ENCODE measurements at regions of chr10 and their contacts with region 1.

Region 1: DNA sequence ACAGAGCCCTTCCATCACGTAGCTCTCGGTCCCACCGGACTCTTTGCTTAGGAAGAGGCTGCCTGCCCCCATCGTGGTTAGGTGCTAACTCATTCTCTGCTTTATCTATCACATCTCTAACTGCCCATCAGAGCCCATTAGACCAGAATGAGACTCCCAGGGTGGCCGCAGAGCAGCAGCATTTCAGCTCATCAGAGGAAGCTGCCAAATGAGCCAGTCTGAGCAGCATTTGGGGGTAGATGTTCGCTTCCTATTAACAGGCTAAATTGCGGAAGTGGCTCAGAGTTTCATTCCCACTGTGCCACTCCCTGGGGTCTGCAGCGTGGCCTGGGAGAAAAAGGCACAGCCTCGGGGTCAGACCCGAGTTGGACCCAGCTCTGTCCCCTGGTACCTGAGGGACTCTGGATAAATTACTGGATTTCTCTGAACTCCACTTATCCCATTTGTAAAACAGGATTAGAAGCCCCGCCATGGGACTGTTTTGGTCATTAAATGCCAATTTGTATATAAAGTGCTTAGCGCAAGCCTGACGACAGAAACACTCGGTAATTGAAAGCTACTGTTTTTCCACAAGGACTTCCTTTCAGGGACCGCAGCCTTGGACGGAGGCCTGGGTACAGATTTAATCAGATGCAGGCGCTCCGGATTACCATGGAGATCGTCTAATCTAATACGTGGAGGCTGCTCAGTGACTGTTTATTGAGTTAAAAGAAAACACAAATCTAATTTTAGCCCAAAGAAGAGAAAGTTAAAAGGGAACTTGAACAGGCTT is 73.8 kb upstream of the PRLHR start:
- DNase-seq: peak in 3 of 5 donors; percentile 11 to 48 (median 18)
- H3K4me3 ChIP-seq: no peak overlapping the region
- H3K4me3 Mint-ChIP-seq: peak overlapping the region in 6 of 8 donors; percentile 22 to 70 (median 28)
- H3K27ac ChIP-seq: no peak overlapping the region
- H3K27ac Mint-ChIP-seq: peak overlapping the region in 5 of 7 donors; percentile 7 to 71 (median 55)
- H3K4me1 ChIP-seq: peaks cover 27% of the 10 kb centered on the region
- H3K4me1 Mint-ChIP-seq: peaks cover 14 to 39% (median 30%) of the 10 kb centered on the region in 4 donors
- H3K27me3 ChIP-seq: no peaks in the 10 kb centered on the region
- H3K27me3 Mint-ChIP-seq: no peaks in the 10 kb centered on the region

Region 2: GRCh38 chr10:118341791-118342637 is 327.2 kb before region 1 on chr10 and contains the start of gene FAM204A:
- CTCF ChIA-PET with region 1: no interaction called
- POLR2A ChIA-PET with region 1: no interaction called
- intact Hi-C with region 1: no loop called
- DNase-seq: peak; percentile 96 to 99 (median 97)
- H3K4me3 ChIP-seq: peak within 1 kb of the TSS; percentile 88 to 96
- H3K4me3 Mint-ChIP-seq: peak within 1 kb of the TSS; percentile 93 to 100 (median 95)
- H3K27ac ChIP-seq: peak within 1 kb of the TSS; percentile 78
- H3K27ac Mint-ChIP-seq: peak within 1 kb of the TSS; percentile 93 to 99 (median 97)
- H3K4me1 ChIP-seq: peaks cover 46% of the 10 kb centered on the region
- H3K4me1 Mint-ChIP-seq: peaks cover 35 to 64% (median 49%) of the 10 kb centered on the region in 4 donors
- H3K27me3 ChIP-seq: no peaks in the 10 kb centered on the region
- H3K27me3 Mint-ChIP-seq: peaks cover 0 to 2% of the 10 kb centered on the region in 2 donors
- total RNA-seq, gene FAM204A: 64.3 to 65.9 TPM

Region 3: DNA sequence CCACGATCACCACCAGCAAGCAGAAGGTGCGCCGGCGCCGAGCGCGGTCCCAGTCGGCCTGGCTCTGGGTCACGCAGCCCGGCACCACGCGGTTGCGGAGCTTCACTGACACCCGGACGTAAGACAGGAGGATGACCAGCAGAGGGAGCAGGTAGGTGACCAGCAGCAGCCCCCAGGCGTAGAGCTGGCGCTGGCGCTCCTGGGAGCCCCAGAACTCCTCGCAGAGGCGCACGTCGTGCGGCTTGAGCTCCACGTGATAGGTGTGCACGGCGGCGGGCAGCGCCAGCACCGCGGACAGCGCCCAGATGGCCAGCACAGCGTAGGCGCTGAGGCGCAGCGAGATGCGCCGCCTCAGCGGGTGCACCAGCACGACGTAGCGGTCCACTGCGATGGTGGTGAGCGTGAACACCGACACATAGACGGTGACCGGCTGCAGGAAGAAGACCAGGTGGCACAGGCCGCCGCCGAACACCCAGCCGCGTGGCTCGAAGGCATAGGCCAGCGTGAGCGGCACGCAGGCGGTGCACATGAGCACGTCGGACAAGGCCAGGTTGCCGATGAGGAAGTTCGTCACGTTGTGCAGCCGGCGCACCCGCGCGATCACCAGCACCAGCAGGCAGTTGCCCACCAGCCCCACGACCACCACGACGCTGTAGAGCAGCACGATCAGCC is 74.7 kb before region 1 on chr10:
- CTCF ChIA-PET with region 1: interaction called, 3 read pairs
- POLR2A ChIA-PET with region 1: no interaction called
- intact Hi-C with region 1: loop called (anchors 10 kb)
- DNase-seq: peak in 4 of 5 donors; percentile 20 to 35 (median 29)
- H3K4me3 ChIP-seq: no peak overlapping the region
- H3K4me3 Mint-ChIP-seq: peak overlapping the region in 3 of 8 donors; percentile 8 to 67 (median 50)
- H3K27ac ChIP-seq: no peak overlapping the region
- H3K27ac Mint-ChIP-seq: no peak overlapping the region
- H3K4me1 ChIP-seq: peaks cover 17% of the 10 kb centered on the region
- H3K4me1 Mint-ChIP-seq: peaks cover 8 to 34% (median 14%) of the 10 kb centered on the region in 4 donors
- H3K27me3 ChIP-seq: peaks cover 17% of the 10 kb centered on the region
- H3K27me3 Mint-ChIP-seq: peaks cover 41 to 44% of the 10 kb centered on the region in 2 donors

Measured in CD4-positive, alpha-beta memory T cell (primary cell).